ENCODE measurements at regions of chr7 and their contacts with region 1.

Region 1: DNA sequence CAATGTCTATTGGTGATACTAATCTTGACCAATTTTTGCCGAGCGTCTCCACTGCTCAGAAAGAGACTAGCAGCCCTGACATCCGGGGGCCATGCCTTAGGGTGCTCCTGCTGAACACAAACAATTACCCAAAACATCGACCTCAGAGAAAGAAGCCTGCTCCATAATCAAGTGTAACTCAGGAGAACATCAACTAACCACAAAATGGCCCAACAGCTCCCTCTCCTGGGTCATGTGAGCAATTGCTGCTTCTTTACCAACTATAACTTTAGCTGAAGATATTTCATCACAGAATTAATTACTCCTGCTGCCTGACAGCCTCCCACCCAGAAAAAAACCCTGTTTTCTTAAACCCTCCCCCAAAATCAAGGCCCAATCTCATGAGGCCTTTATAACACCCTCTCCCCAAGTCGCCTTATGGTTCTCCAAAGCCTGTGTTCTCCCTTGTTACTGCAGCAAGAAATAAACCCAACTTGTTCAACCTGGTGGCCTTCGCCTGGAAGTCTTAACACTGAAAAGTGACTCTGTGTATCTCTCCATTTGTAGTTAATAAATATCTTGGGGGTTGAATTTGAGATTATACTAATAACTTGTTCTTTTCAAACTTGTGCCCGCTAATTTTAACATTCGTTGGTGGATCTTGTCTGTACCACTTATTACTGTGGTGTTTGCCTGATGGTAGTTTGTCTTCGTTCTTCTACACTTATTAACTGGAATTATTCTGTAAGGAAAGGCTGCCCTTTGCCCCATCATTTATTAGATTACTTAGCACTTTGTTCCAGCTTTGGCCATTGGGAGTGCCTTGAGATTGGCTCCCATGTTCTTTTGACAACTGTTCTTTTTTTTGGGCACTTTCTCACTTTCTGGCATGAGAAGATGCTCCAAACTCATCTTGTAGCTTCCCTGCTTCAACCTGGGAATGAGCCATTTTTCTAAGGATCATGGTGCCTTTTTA is 21.2 kb upstream of the RAMP3 start:
- DNase-seq: peak; percentile 85
- ATAC-seq: peak; percentile 82
- H3K4me3 Mint-ChIP-seq: no peak overlapping the region
- H3K27ac Mint-ChIP-seq: peak overlapping the region; percentile 27
- H3K4me1 Mint-ChIP-seq: peaks cover 19% of the 10 kb centered on the region
- H3K27me3 Mint-ChIP-seq: peaks cover 9% of the 10 kb centered on the region

Region 2: DNA sequence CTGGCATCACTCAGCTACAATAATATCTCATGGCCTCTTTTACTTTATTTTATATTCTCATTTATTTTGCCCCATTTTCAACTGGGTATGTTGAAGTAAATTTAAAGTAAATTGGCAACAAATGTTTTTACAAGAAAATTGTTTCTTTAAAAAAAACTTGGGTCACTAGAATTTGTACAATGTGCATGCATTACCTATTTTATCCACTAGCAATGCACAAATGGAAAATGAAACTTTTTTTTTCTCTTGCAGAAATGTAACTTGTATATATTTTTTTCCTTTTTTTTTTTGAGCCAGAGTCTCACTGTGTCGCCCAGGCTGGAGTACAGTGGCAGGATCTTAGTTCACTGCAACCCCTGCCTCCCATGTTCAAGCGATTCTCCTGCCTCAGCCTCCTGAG is 278.2 kb before region 1 on chr7:
- CTCF ChIA-PET with region 1: interaction called, 28 read pairs
- POLR2A ChIA-PET with region 1: no interaction called
- DNase-seq: no peak
- ATAC-seq: no peak
- H3K4me3 Mint-ChIP-seq: no peak overlapping the region
- H3K27ac Mint-ChIP-seq: no peak overlapping the region
- H3K4me1 Mint-ChIP-seq: peaks cover 13% of the 10 kb centered on the region
- H3K27me3 Mint-ChIP-seq: peaks cover 4% of the 10 kb centered on the region

Region 3: GRCh38 chr7:44980393-44981034 is 155.9 kb before region 1 on chr7:
- CTCF ChIA-PET with region 1: interaction called, 90 read pairs
- POLR2A ChIA-PET with region 1: interaction called, 4 read pairs
- DNase-seq: peak; percentile 76
- ATAC-seq: peak; percentile 11
- H3K4me3 Mint-ChIP-seq: peak overlapping the region; percentile 95
- H3K27ac Mint-ChIP-seq: peak overlapping the region; percentile 98
- H3K4me1 Mint-ChIP-seq: peaks cover 75% of the 10 kb centered on the region
- H3K27me3 Mint-ChIP-seq: no peaks in the 10 kb centered on the region

Region 4: GRCh38 chr7:45073031-45073785 is 63.2 kb before region 1 on chr7:
- CTCF ChIA-PET with region 1: interaction called, 10 read pairs
- POLR2A ChIA-PET with region 1: no interaction called
- DNase-seq: no peak
- ATAC-seq: no peak
- H3K4me3 Mint-ChIP-seq: no peak overlapping the region
- H3K27ac Mint-ChIP-seq: peak overlapping the region; percentile 44
- H3K4me1 Mint-ChIP-seq: peaks cover 15% of the 10 kb centered on the region
- H3K27me3 Mint-ChIP-seq: no peaks in the 10 kb centered on the region

Region 5: DNA sequence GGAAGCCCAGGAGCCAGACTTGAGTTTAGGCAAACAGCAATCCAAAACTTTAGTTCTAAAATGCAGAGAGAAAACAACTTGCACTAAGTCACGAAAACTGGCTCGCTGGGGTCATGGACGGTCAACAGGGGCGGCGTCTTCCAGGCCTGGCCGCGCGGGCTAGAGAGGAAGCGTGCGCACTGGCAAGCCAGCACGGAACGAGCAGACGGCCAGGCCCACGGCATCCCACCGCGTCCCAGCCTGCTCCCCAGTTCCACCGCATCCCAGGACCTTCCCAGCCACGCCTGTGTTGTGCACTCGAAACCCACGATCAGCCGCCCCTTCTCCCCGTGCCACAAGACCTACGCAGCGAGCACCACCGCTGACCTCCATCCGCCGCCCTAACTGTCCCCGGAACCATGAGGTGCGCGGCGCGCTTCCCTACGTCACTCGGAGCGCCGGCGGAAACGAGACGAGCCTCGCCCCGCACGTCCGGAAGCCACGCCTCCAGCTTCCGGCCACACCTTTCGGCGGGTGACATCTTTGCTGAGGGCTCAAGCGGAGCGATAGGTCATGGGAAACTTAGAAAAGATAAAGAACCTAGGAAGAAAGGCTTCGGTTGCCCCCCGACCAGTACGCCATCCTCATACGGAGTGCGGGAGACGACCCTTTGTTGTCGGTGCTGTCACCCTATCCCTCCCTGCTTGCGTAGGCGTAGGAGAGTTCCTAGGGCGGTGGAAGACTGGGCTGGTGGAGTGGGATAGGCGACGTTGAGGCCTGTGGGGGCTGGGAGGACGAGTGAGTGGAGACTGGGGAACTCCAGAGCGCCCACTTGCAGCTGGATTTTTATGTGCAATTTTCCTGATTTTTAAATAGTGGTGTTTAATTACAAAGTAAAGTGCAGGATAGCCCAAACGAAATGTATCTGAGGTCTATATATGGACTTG is 24.8 kb before region 1 on chr7 and contains the start of gene TBRG4:
- CTCF ChIA-PET with region 1: interaction called, 38 read pairs
- POLR2A ChIA-PET with region 1: interaction called, 38 read pairs
- DNase-seq: peak; percentile 97
- ATAC-seq: peak; percentile 90
- H3K4me3 Mint-ChIP-seq: peak within 1 kb of the TSS; percentile 90
- H3K27ac Mint-ChIP-seq: peak within 1 kb of the TSS; percentile 97
- H3K4me1 Mint-ChIP-seq: peaks cover 41% of the 10 kb centered on the region
- H3K27me3 Mint-ChIP-seq: peaks cover 16% of the 10 kb centered on the region
- total RNA-seq, gene TBRG4: 133 to 137 TPM

Measured in activated CD8-positive, alpha-beta T cell treated with anti-CD3 and anti-CD28 coated beads, Interleukin-2, amount 10 ng/mL, durations not matched to agents 7 days and 5 days (primary cell).